Activated T-helper 1 cell treated with anti-CD3 and anti-CD28 coated beads, Interleukin-12 subunit alpha, Interleukin-12 subunit beta, Interleukin-2, Interleukin-4 antibody, amounts not matched to agents 30 ng/mL and 10 ng/mL and 1 ng/mL, durations not matched to agents 14 hours and 24 hours and 36 hours (primary cell): ENCODE measurements at regions of chr7 and their contacts with region 1.

Region 1: GRCh38 chr7:8035647-8036518 is 67.3 kb downstream of the GLCCI1 start:
- DNase-seq: no peak
- H3K4me3 Mint-ChIP-seq: no peak overlapping the region
- H3K27ac Mint-ChIP-seq: no peak overlapping the region
- H3K4me1 Mint-ChIP-seq: peaks cover 18% of the 10 kb centered on the region
- H3K27me3 Mint-ChIP-seq: no peaks in the 10 kb centered on the region

Region 2: GRCh38 chr7:8017423-8017822 is 18.5 kb before region 1 on chr7:
- intact Hi-C with region 1: loop called (anchors 2 kb)
- DNase-seq: no peak
- H3K4me3 Mint-ChIP-seq: no peak overlapping the region
- H3K27ac Mint-ChIP-seq: no peak overlapping the region
- H3K4me1 Mint-ChIP-seq: peaks cover 12% of the 10 kb centered on the region
- H3K27me3 Mint-ChIP-seq: no peaks in the 10 kb centered on the region

Region 3: GRCh38 chr7:8109196-8110022 is 73.5 kb after region 1 on chr7:
- intact Hi-C with region 1: no loop called
- DNase-seq: no peak
- H3K4me3 Mint-ChIP-seq: no peak overlapping the region
- H3K27ac Mint-ChIP-seq: no peak overlapping the region
- H3K4me1 Mint-ChIP-seq: peaks cover 40% of the 10 kb centered on the region
- H3K27me3 Mint-ChIP-seq: no peaks in the 10 kb centered on the region

Region 4: DNA sequence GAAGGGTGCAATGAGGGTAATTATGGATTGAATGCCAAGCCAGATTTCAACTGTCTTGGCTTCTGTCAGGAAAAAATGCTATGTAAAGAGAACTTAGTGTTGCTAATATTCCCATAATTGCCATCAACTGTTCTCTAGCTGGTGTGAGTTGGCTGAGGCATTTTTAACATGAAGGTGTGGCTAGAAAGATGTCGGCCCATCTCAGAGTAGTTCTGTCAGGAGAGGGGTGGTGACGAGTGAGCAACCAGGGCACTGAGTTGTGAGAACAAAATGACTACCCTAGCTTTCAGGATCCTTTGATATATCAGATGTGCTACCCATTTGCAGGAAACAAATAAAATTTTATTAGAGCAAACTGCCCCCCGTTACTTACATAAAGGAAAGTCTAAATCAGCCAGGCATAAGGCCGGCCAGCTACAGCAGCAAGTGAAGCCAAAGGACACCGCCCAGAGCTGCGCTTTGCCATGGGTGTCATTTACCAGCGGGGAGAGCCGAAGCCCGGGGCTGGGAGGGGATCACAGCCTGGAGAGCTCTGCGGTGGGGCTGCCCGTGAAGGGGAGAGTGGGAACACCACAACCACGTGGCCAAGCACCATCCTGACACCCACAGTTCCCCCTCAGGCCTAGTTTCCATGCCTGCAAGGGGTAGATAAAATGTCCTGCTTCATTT is 84.6 kb after region 1 on chr7:
- intact Hi-C with region 1: no loop called
- DNase-seq: no peak
- H3K4me3 Mint-ChIP-seq: no peak overlapping the region
- H3K27ac Mint-ChIP-seq: no peak overlapping the region
- H3K4me1 Mint-ChIP-seq: peaks cover 82% of the 10 kb centered on the region
- H3K27me3 Mint-ChIP-seq: peaks cover 5% of the 10 kb centered on the region